ENCODE measurements at regions of chr12 and their contacts with region 1.

Region 1: DNA sequence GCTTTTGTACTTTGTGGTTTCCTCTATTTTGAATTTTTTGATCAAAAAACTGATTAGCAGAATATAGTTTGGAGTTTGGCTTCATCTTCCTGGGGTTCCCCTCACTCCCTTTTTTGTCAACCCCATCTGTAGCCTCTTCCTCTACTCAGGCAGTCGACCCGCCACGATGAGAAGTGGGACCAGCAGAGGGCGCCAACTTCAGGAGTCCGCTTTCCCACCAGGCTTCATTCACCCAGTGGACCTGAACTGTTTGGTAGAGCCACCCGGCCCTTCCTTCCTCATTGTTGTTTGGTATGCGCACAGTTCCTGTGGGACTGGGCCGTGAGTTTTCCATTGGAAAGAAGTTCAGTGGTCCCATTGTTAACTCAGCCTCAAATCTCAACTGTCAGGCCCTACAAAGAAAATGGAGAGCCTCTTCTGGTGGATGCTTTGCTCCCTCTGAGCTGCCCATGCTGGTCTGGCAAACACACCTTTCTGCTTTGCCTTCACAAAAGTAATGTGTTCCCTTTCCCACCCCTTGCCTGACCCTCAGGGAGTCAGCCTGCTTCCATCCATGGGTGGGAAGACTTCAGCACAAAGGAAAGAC is 21.7 kb downstream of the TMBIM6 start:
- DNase-seq: peak; percentile 38 to 92
- H3K4me3 ChIP-seq: no peak overlapping the region
- H3K27ac ChIP-seq: no peak overlapping the region
- H3K4me1 ChIP-seq: peaks cover 0 to 4% (median 0%) of the 10 kb centered on the region in 4 experiments; a peak in 1 of 7 replicates
- H3K27me3 ChIP-seq: no peaks in the 10 kb centered on the region
- CTCF ChIP-seq: peak; percentile 83 to 89 (median 87)
- EP300 ChIP-seq: no peak
- POLR2A ChIP-seq: no peak
- RAD21 ChIP-seq: peak; percentile 50 to 54; a peak in 3 of 4 replicates

Region 2: GRCh38 chr12:49750027-49750995 is 12.8 kb before region 1 on chr12:
- CTCF ChIA-PET with region 1: interaction called, 18 read pairs
- POLR2A ChIA-PET with region 1: interaction called, 11 read pairs
- DNase-seq: no peak
- H3K4me3 ChIP-seq: no peak overlapping the region; a peak in 1 of 8 replicates
- H3K27ac ChIP-seq: no peak overlapping the region
- H3K4me1 ChIP-seq: peaks cover 0 to 7% (median 3%) of the 10 kb centered on the region in 4 experiments; a peak in 3 of 7 replicates
- H3K27me3 ChIP-seq: no peaks in the 10 kb centered on the region; a peak in 1 of 7 replicates
- CTCF ChIP-seq: no peak
- EP300 ChIP-seq: no peak
- POLR2A ChIP-seq: no peak
- RAD21 ChIP-seq: no peak

Region 3: GRCh38 chr12:49909826-49910225 is 146.7 kb after region 1 on chr12:
- CTCF ChIA-PET with region 1: no interaction called
- POLR2A ChIA-PET with region 1: no interaction called
- DNase-seq: peak; percentile 23 to 64
- H3K4me3 ChIP-seq: no peak overlapping the region
- H3K27ac ChIP-seq: no peak overlapping the region
- H3K4me1 ChIP-seq: peaks cover 0 to 25% (median 12%) of the 10 kb centered on the region in 4 experiments; a peak in 6 of 7 replicates
- H3K27me3 ChIP-seq: peaks cover 0 to 3% (median 2%) of the 10 kb centered on the region in 4 experiments; a peak in 3 of 7 replicates
- CTCF ChIP-seq: no peak
- EP300 ChIP-seq: no peak
- POLR2A ChIP-seq: no peak
- RAD21 ChIP-seq: no peak

Region 4: GRCh38 chr12:49920241-49920921 is 157.3 kb after region 1 on chr12:
- CTCF ChIA-PET with region 1: no interaction called
- POLR2A ChIA-PET with region 1: no interaction called
- DNase-seq: no peak
- H3K4me3 ChIP-seq: no peak overlapping the region
- H3K27ac ChIP-seq: no peak overlapping the region
- H3K4me1 ChIP-seq: no peaks in the 10 kb centered on the region; a peak in 1 of 7 replicates
- H3K27me3 ChIP-seq: no peaks in the 10 kb centered on the region
- CTCF ChIP-seq: no peak
- EP300 ChIP-seq: no peak
- POLR2A ChIP-seq: no peak
- RAD21 ChIP-seq: no peak

Measured in H1 (cell line).